OCI-LY7 (cell line): ENCODE measurements at regions of chr5 and their contacts with region 1.

Region 1: DNA sequence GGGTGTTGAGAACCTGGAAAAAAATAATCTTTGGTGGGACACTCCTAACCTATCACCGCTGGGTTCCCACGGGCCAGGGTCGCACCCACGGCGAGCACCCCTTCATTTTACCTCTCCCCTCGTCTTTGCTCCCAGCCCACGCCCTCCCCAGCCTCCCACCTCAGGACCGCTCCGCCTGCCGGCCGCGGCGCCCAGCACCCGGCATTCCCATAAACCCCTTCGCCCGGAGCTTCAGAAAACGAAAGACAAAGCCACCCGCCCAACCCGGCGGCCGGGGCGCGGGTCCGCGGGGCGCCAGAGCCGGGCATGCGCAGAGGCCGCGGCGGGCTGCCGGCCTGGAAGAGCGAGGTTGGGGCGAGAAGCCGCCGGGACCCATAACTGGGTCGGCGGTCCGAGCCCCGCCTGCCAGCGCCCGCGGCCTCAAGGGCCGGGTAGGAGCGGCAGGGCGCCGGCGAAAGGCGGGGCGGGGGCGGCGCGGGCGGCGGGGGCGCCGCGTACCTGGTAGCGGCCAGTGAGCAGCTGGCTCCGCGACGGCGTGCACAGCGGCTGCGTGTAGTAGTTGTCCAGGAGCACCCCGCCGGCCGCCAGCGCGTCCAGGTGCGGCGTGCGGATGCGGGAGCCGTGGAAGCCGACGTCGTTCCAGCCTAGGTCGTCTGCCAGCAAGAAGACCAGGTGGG is 533 bp downstream of the ARSB start:
- DNase-seq: peak; percentile 88
- H3K4me3 ChIP-seq: peak overlapping the region; percentile 75
- H3K27ac ChIP-seq: peak overlapping the region; percentile 88
- H3K4me1 ChIP-seq: peaks cover 40% of the 10 kb centered on the region
- CTCF ChIP-seq: peak; percentile 33

Region 2: DNA sequence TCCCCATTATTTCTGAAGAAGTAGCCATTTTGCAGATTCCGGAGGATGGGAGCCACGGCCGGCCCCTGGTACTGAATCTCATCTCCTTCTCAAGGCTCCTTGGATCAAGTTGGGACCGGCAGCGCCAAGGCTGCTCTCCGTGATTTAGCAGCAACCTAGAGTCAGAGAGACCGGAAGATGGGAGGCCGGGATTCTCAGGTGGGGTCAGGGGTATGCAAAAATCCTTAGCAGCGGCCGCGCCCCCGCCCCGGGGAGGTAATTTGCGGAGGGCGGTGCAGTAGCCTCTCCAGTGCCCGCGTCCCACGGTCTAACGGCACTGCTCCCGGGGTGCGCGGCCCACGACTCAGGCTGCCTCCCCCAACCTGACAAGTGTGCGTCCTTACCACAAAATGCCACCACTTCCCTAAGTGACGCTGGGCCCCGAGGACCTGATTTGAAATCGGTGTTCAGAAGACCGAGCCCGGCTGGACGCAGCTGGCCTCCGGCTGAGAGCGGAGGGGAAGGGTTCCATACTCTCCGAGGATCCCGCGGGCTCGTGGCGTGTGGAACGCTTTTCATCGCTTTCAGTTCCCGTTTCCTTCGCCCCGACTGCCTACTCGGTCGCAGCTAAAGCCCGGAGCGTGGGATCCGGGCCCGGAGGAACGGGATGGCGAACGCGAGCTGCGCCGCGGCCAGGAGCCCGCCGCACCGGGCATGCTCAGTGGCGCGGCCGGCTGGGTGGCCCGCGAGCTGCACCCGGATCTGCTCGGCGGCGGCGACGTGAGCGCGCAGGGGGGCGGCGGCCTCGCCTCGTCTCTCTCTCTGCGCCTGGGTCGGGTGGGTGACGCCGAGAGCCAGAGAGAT is 624.5 kb before region 1 on chr5 and contains the start of gene SCAMP1:
- CTCF ChIA-PET with region 1: no interaction called
- POLR2A ChIA-PET with region 1: no interaction called
- intact Hi-C with region 1: loop called (anchors 1 kb)
- DNase-seq: peak; percentile 96
- H3K4me3 ChIP-seq: peak within 1 kb of the TSS; percentile 90
- H3K27ac ChIP-seq: peak within 1 kb of the TSS; percentile 85
- H3K4me1 ChIP-seq: peaks cover 22% of the 10 kb centered on the region
- CTCF ChIP-seq: no peak
- total RNA-seq, gene SCAMP1: 16.7 and 18.0 TPM in 2 replicates

Region 3: GRCh38 chr5:78717674-78718625 is 266.6 kb before region 1 on chr5:
- CTCF ChIA-PET with region 1: no interaction called
- POLR2A ChIA-PET with region 1: interaction called, 3 read pairs
- intact Hi-C with region 1: loop called (anchors 2 kb)
- DNase-seq: peak; percentile 40
- H3K4me3 ChIP-seq: peak overlapping the region; percentile 71
- H3K27ac ChIP-seq: peak overlapping the region; percentile 99
- H3K4me1 ChIP-seq: peaks cover 71% of the 10 kb centered on the region
- CTCF ChIP-seq: no peak

Region 4: DNA sequence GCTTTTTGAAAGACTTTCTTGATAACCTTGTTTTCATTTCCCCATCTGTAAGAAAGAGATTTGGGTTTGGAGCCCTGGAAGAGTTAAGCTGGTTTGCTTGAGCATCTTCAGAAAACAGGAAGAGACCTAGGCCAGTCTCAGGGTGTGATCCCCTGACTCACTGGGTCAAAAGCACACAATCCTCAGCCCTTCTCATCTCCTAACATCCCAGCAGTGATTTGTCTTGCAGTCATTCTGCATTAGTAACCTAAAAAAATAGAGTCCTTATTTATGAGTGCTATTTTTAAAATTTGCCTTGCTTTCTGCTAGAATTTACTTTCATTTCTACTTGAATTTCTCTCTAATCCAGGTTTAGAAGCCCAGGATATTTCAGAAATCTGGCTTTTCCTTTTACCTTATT is 16.9 kb after region 1 on chr5:
- CTCF ChIA-PET with region 1: no interaction called
- POLR2A ChIA-PET with region 1: interaction called, 3 read pairs
- intact Hi-C with region 1: loop called (anchors 2 kb)
- DNase-seq: no peak
- H3K4me3 ChIP-seq: no peak overlapping the region
- H3K27ac ChIP-seq: no peak overlapping the region
- H3K4me1 ChIP-seq: no peaks in the 10 kb centered on the region
- CTCF ChIP-seq: no peak

Region 5: DNA sequence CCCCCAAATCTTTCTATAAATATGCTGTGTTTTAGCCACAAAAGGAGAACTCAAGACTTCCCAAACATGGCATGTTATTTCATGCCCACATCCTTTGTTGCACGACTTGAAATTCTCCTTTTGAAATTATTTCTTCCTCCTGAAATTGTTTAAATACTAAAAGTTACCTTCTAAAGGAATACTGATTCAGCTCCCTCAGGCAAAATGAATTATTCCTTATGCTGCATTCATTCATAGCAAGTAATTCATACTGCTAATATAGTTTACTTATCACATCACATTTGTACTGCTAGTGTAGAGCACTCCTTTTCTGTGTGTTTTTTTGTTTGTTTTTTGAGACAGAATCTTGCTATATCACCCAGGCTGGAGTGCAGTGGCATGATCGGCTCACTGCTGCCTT is 172.7 kb after region 1 on chr5:
- CTCF ChIA-PET with region 1: no interaction called
- POLR2A ChIA-PET with region 1: no interaction called
- intact Hi-C with region 1: no loop called
- DNase-seq: no peak
- H3K4me3 ChIP-seq: no peak overlapping the region
- H3K27ac ChIP-seq: no peak overlapping the region
- H3K4me1 ChIP-seq: no peaks in the 10 kb centered on the region
- CTCF ChIP-seq: no peak

Region 6: GRCh38 chr5:79235634-79236363 is 251.2 kb after region 1 on chr5 and contains the start of gene JMY:
- CTCF ChIA-PET with region 1: no interaction called
- POLR2A ChIA-PET with region 1: no interaction called
- intact Hi-C with region 1: loop called (anchors 5 kb)
- DNase-seq: peak; percentile 87
- H3K4me3 ChIP-seq: peak within 1 kb of the TSS; percentile 97
- H3K27ac ChIP-seq: peak within 1 kb of the TSS; percentile 51
- H3K4me1 ChIP-seq: peaks cover 27% of the 10 kb centered on the region
- CTCF ChIP-seq: no peak
- total RNA-seq, gene JMY: 4.3 and 4.5 TPM in 2 replicates